ENCODE measurements at regions of chr3 and their contacts with region 1.

Region 1: DNA sequence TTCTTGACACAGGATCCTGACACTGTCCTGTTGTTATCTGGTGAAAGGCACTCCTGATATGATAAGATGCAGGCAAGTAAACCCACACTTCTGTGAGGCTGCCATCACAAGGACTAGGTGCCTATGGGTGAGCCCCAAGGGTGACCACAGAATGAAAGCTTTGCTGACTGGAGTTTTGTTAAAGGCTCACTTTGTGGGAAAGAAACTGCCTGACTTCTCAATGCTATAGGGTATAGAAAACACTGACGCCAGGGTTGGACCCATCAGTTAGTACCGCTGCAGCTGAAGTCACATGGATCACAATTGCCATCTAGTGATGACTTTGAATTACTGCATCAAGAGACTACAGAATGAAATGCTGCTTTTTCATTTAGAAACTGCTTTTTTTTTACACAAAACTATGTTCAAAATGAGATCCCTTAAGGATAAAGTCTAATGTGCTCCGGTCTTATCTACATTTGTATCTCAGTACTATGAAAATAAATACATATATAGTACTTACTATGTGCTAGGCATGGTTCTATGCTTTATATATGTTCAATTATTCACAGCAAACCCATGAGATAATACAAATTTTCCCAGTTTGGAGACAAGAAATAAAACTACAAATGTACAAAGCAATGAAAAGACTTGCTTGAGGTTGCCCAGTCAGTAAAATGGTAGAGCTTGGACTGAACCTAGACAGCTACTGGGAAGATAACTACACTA is 64.2 kb upstream of the CMSS1 start:
- DNase-seq: peak in 3 of 10 donors; percentile 10 to 57 (median 30)
- H3K4me3 ChIP-seq: peak overlapping the region in 1 of 59 donors; percentile 23
- H3K27ac ChIP-seq: no peak overlapping the region
- H3K27me3 ChIP-seq: no peaks in the 10 kb centered on the region
- CTCF ChIP-seq: peak; percentile 48 to 89 (median 76)

Region 2: DNA sequence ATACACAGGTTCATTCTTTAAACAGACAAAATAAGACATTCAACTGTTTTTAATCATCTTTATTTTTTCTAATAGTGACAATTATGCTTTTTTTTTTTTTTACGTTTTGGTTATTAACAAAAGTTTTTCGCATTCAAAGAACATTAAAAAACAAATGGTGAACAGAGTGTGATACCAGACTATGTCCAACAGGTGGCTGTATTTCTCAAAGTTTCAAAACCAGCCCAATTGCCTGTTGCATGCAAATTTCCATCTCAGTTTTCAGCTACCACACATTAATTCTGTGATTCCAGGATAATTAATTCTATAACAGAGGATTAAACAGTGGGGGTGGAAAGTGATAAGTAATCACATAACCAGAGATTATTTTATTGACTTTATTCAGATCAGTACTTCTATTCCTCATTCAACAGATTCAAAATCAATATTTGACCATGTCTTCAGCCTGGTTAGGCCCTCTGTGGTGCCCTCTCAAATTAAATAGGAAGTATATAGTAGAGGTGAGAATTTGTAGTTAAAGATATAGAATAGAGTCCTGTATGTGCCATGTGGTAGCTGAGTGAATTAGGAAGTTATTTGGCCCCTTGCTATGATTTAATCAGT is 729.7 kb before region 1 on chr3:
- intact Hi-C with region 1: loop called in 1 of 2 experiments (anchors 10 kb)
- DNase-seq: no peak
- H3K4me3 ChIP-seq: no peak overlapping the region
- H3K27ac ChIP-seq: no peak overlapping the region
- H3K27me3 ChIP-seq: no peaks in the 10 kb centered on the region
- CTCF ChIP-seq: peak; percentile 57 to 90 (median 75)

Region 3: GRCh38 chr3:99645277-99646106 is 107.9 kb before region 1 on chr3:
- intact Hi-C with region 1: loop called in 1 of 2 experiments (anchors 10 kb)
- DNase-seq: no peak
- H3K4me3 ChIP-seq: no peak overlapping the region
- H3K27ac ChIP-seq: peak overlapping the region in 3 of 59 donors; percentile 20 to 61 (median 53)
- H3K27me3 ChIP-seq: no peaks in the 10 kb centered on the region
- CTCF ChIP-seq: peak in 54 of 56 donors; percentile 0 to 65 (median 44)